CD8-positive, alpha-beta memory T cell (primary cell): ENCODE measurements at regions of chr6 and their contacts with region 1.

Region 1: GRCh38 chr6:129748212-129748900 is 38.4 kb upstream of the ARHGAP18 start:
- DNase-seq: peak; percentile 31 to 64 (median 51)
- H3K4me3 ChIP-seq: peak overlapping the region; percentile 43
- H3K4me3 Mint-ChIP-seq: peak overlapping the region; percentile 68 to 90 (median 78)
- H3K27ac ChIP-seq: peak overlapping the region; percentile 12
- H3K27ac Mint-ChIP-seq: peak overlapping the region; percentile 80 to 98 (median 91)
- H3K4me1 ChIP-seq: peaks cover 53% of the 10 kb centered on the region
- H3K4me1 Mint-ChIP-seq: peaks cover 50 to 74% (median 61%) of the 10 kb centered on the region in 3 donors
- H3K27me3 ChIP-seq: no peaks in the 10 kb centered on the region
- H3K27me3 Mint-ChIP-seq: no peaks in the 10 kb centered on the region

Region 2: GRCh38 chr6:129429956-129430355 is 318.4 kb before region 1 on chr6:
- CTCF ChIA-PET with region 1: no interaction called
- POLR2A ChIA-PET with region 1: interaction called, 12 read pairs
- DNase-seq: no peak
- H3K4me3 ChIP-seq: no peak overlapping the region
- H3K4me3 Mint-ChIP-seq: no peak overlapping the region
- H3K27ac ChIP-seq: no peak overlapping the region
- H3K27ac Mint-ChIP-seq: no peak overlapping the region
- H3K4me1 ChIP-seq: no peaks in the 10 kb centered on the region
- H3K4me1 Mint-ChIP-seq: no peaks in the 10 kb centered on the region
- H3K27me3 ChIP-seq: no peaks in the 10 kb centered on the region
- H3K27me3 Mint-ChIP-seq: peaks cover 3 to 9% of the 10 kb centered on the region in 2 donors

Region 3: DNA sequence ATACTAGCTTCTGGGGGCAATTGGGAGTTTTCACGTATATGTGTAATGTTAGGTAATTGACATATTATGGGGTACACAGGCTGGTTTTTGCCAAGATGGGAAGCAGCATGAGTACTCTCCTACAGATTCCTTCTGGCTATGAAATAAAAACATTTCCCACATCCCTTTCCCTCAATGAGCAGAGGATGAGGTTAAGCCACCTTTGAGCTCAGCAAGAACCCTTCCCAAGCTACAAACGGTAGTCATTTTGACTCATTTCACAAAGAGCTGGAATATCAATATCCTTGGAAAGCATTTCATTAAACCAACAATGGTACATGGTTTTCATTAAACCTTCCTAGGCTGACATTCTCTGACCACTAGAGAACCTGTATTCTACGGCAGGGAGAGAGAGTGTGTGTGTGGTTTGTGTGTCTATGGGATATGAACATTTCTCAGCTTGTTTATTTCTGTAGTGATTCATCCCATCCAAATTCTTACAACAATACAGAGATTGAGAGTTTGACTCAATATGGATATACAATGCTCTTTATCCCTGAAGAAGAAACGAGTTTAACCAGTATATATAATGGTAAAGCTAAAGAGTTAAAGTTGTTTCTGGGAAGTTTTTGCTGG is 157.8 kb before region 1 on chr6:
- CTCF ChIA-PET with region 1: no interaction called
- POLR2A ChIA-PET with region 1: no interaction called
- DNase-seq: no peak
- H3K4me3 ChIP-seq: no peak overlapping the region
- H3K4me3 Mint-ChIP-seq: no peak overlapping the region
- H3K27ac ChIP-seq: no peak overlapping the region
- H3K27ac Mint-ChIP-seq: no peak overlapping the region
- H3K4me1 ChIP-seq: no peaks in the 10 kb centered on the region
- H3K4me1 Mint-ChIP-seq: no peaks in the 10 kb centered on the region
- H3K27me3 ChIP-seq: no peaks in the 10 kb centered on the region
- H3K27me3 Mint-ChIP-seq: no peaks in the 10 kb centered on the region

Region 4: DNA sequence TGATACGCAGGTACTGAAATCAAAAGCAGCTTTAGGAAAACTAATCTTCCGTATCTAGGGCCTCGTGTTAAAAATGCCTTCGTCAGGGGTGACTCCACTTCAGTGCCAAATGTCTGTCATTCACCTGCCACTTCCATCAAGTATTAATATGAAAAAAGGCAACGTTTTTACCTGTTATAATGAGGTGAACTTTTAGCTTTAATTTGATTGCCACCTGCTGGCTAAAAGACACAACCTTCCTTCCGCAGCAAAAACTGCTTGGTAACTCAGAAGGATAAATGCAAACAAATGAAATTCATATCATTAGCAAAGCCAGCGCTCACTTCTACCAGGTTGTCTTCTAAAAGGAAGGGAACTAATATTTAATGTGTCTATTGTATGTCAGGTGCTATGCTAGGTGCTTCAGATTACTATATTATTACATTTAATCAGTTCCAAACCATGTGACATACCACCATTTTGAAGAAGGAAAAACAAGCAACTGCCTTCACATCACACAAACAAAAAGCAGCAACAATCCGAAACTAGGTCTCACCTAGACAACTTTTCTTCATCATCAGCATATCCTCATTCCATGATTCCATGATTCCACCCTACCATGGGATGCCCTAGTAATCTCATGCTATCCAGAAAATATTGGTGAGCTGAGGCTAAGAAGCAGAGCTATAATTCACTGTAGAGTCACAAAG is 17.7 kb before region 1 on chr6:
- CTCF ChIA-PET with region 1: interaction called, 27 read pairs
- POLR2A ChIA-PET with region 1: interaction called, 13 read pairs
- DNase-seq: peak in 3 of 5 donors; percentile 37 to 50 (median 41)
- H3K4me3 ChIP-seq: no peak overlapping the region
- H3K4me3 Mint-ChIP-seq: no peak overlapping the region
- H3K27ac ChIP-seq: no peak overlapping the region
- H3K27ac Mint-ChIP-seq: peak overlapping the region in 2 of 8 donors; percentile 33 to 37
- H3K4me1 ChIP-seq: no peaks in the 10 kb centered on the region
- H3K4me1 Mint-ChIP-seq: peaks cover 14 to 22% (median 16%) of the 10 kb centered on the region in 3 donors
- H3K27me3 ChIP-seq: no peaks in the 10 kb centered on the region
- H3K27me3 Mint-ChIP-seq: no peaks in the 10 kb centered on the region

Region 5: DNA sequence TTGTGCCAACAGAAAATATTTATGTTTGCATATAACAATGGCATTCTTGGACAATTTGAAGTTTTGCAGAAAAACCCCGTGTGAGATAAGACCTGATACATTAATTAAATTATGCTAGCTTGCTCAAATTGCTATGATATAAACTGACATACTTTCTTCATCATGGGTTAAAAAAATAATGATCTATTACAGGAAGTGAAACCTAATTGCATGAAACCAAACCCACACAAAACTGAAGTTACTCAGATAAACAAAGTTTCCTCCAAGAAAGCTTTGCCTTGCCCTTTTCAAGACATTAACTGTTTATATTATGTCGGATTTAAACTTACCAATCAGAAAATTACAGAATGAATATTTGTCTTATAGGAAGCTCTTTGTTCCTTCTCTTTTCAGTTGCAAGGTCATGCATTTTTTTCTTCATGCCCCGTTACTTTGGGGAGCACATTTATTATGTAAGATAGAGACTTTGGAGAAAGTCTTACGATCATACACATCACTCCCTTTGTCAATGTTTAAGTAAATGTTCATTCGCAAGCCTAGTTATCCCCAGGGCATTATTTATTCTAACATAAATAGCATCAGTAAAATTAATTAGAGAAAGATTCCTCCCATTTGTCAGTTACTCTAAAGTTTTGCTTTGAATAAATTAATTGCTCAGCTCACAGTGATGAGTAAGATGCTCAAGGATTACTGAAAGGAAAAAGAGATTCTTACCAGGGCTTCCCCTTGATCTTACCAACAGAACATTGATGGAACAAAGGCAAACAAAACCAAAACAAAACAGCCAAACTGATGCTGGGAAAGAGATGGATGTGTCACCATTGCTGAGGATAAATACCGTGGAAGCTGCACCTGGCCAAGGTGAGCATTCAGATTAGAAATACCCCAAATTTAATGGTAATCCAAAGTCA is 127.5 kb after region 1 on chr6:
- CTCF ChIA-PET with region 1: no interaction called
- POLR2A ChIA-PET with region 1: no interaction called
- DNase-seq: no peak
- H3K4me3 ChIP-seq: no peak overlapping the region
- H3K4me3 Mint-ChIP-seq: peak overlapping the region in 5 of 7 donors; percentile 29 to 68 (median 55)
- H3K27ac ChIP-seq: no peak overlapping the region
- H3K27ac Mint-ChIP-seq: peak overlapping the region in 5 of 8 donors; percentile 23 to 77 (median 32)
- H3K4me1 ChIP-seq: no peaks in the 10 kb centered on the region
- H3K4me1 Mint-ChIP-seq: peaks cover 12 to 25% (median 17%) of the 10 kb centered on the region in 3 donors
- H3K27me3 ChIP-seq: no peaks in the 10 kb centered on the region
- H3K27me3 Mint-ChIP-seq: no peaks in the 10 kb centered on the region